ENCODE measurements at regions of chr11 and their contacts with region 1.

Region 1: DNA sequence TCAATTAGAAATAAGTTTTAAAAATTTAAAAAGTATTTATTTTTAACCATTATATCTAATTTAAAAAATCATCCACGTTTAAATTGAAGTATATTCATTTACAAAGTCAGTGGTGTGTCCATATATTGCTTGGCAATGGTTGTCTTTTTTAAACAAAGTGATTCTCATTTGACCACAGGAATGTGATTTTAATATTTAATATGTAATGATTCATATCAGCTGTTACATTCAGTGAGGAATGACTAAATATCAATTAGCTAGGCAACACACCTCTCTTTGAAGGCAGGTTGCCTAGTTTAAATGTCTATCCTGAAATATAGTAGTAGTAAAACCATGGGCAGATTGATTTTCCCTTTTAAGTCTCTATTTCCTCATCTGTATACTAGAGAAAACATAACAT is 392.2 kb upstream of the CCDC179 start:
- DNase-seq: no peak
- H3K4me3 ChIP-seq: no peak overlapping the region
- H3K27ac ChIP-seq: no peak overlapping the region
- H3K4me1 ChIP-seq: no peaks in the 10 kb centered on the region
- H3K27me3 ChIP-seq: no peaks in the 10 kb centered on the region
- CTCF ChIP-seq: no peak
- EP300 ChIP-seq: no peak
- POLR2A ChIP-seq: no peak
- RAD21 ChIP-seq: no peak

Region 2: GRCh38 chr11:23263466-23263865 is 11.0 kb after region 1 on chr11:
- CTCF ChIA-PET with region 1: interaction called, 10 read pairs
- POLR2A ChIA-PET with region 1: interaction called, 3 read pairs
- DNase-seq: no peak
- H3K4me3 ChIP-seq: no peak overlapping the region
- H3K27ac ChIP-seq: no peak overlapping the region
- H3K4me1 ChIP-seq: no peaks in the 10 kb centered on the region
- H3K27me3 ChIP-seq: no peaks in the 10 kb centered on the region
- CTCF ChIP-seq: no peak
- EP300 ChIP-seq: no peak
- POLR2A ChIP-seq: no peak
- RAD21 ChIP-seq: no peak

Region 3: DNA sequence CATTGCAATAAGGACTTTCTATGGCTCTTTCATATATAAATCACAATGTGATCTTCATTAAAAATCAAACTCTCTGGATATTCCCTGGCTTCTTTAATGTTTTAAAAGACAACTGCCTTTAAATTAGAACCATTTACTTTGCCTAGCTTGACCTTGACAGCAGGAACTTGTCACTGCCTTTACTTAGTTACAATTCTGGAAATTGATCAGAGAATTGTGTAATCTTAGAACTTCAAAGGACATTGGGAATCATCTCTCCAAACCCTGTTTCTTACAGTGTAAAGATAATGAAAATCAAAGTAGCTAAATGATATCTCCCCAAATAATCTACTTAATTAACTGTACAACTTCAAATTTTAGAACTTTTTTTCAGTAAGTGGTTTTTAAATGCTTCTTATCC is 125.5 kb after region 1 on chr11:
- CTCF ChIA-PET with region 1: no interaction called
- POLR2A ChIA-PET with region 1: no interaction called
- DNase-seq: no peak
- H3K4me3 ChIP-seq: no peak overlapping the region
- H3K27ac ChIP-seq: no peak overlapping the region
- H3K4me1 ChIP-seq: no peaks in the 10 kb centered on the region
- H3K27me3 ChIP-seq: no peaks in the 10 kb centered on the region
- CTCF ChIP-seq: no peak
- EP300 ChIP-seq: no peak
- POLR2A ChIP-seq: no peak
- RAD21 ChIP-seq: no peak